Activated CD8-positive, alpha-beta T cell treated with anti-CD3 and anti-CD28 coated beads for 36 hours (primary cell): ENCODE measurements at regions of chr17 and their contacts with region 1.

Region 1: DNA sequence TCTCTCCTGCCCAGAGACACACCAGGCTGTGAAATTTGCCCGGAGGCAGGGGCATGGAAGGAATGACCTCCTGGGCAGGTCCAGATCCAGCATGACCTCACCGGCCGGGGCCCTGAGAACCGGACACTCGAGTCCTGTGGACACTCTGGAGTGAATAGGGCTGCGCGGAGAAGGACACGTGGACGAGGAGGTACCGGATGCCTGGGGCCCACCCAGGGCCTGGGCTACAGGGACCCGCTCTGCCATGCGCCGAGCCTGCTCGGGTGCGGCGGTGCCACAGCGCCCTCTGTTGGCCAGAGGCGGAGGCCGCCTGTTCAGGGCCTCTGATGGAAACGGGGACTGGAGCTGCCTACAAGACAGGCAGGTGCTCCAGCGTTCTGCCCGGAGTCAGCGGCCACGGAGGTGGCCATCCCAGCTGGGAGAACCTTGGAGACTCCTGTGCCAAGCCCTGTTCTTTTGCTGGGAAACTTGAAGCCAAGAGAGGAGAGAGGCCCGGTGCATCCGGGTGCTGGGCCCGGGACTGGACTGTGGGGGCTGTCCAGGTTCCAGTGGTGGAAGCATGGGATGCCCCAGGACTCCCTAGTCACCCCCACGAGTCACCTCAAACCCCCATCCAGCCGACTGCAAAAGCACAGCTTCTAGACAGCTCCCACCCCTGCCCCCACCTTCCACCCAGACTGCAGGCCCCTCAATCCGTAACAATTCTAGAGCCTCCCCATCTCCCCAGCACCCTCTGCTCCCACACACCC is 19.3 kb upstream of the NXPH3 start:
- DNase-seq: peak; percentile 90
- ATAC-seq: peak; percentile 98
- H3K4me3 Mint-ChIP-seq: no peak overlapping the region
- H3K27ac Mint-ChIP-seq: peak overlapping the region; percentile 20
- H3K4me1 Mint-ChIP-seq: peaks cover 2% of the 10 kb centered on the region
- H3K27me3 Mint-ChIP-seq: peaks cover 2% of the 10 kb centered on the region
- CTCF ChIP-seq: peak; percentile 98

Region 2: DNA sequence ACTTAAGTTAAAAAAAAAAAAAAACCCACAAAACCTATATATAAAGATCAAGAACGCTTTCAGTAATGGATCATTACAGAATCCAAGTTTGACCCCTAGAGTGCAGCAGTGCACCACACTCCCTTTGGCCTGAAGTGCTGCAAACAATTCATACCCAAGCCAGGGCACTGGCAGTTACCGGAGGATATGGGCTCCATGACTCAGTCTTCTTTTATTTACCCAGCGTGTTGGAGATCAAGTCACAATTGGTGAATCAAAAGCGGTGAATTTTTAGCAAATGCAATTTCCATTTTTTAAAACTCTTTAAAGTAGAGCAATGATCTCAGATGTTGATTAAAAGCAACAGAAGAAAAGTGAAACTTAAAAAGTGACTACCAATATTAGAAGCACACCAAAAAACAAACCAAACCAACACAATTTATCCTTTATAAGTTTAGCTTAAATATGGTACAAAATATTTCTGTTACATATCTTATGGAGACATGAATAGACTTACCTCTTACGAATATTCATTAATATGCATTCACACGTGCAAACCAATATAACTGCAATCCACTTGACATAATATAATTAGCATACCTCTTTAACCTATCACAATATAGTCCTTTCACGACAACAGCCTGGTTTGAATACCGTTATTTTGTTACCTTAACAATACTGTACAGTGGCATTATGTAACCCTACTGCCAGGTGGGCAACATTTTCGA is 240.7 kb before region 1 on chr17:
- CTCF ChIA-PET with region 1: interaction called, 12 read pairs
- POLR2A ChIA-PET with region 1: no interaction called
- intact Hi-C with region 1: no loop called
- DNase-seq: peak; percentile 89
- ATAC-seq: peak; percentile 100
- H3K4me3 Mint-ChIP-seq: peak overlapping the region; percentile 47
- H3K27ac Mint-ChIP-seq: peak overlapping the region; percentile 14
- H3K4me1 Mint-ChIP-seq: peaks cover 28% of the 10 kb centered on the region
- H3K27me3 Mint-ChIP-seq: no peaks in the 10 kb centered on the region
- CTCF ChIP-seq: peak; percentile 91

Region 3: GRCh38 chr17:49414622-49415350 is 141.6 kb before region 1 on chr17 and contains the start of gene PHB1:
- CTCF ChIA-PET with region 1: interaction called, 160 read pairs
- POLR2A ChIA-PET with region 1: no interaction called
- intact Hi-C with region 1: loop called (anchors 2 kb)
- DNase-seq: peak; percentile 98
- ATAC-seq: peak; percentile 100
- H3K4me3 Mint-ChIP-seq: peak within 1 kb of the TSS; percentile 95
- H3K27ac Mint-ChIP-seq: peak within 1 kb of the TSS; percentile 90
- H3K4me1 Mint-ChIP-seq: peaks cover 20% of the 10 kb centered on the region
- H3K27me3 Mint-ChIP-seq: peaks cover 2% of the 10 kb centered on the region
- CTCF ChIP-seq: no peak
- total RNA-seq, gene PHB1: 363 to 381 TPM

Region 4: DNA sequence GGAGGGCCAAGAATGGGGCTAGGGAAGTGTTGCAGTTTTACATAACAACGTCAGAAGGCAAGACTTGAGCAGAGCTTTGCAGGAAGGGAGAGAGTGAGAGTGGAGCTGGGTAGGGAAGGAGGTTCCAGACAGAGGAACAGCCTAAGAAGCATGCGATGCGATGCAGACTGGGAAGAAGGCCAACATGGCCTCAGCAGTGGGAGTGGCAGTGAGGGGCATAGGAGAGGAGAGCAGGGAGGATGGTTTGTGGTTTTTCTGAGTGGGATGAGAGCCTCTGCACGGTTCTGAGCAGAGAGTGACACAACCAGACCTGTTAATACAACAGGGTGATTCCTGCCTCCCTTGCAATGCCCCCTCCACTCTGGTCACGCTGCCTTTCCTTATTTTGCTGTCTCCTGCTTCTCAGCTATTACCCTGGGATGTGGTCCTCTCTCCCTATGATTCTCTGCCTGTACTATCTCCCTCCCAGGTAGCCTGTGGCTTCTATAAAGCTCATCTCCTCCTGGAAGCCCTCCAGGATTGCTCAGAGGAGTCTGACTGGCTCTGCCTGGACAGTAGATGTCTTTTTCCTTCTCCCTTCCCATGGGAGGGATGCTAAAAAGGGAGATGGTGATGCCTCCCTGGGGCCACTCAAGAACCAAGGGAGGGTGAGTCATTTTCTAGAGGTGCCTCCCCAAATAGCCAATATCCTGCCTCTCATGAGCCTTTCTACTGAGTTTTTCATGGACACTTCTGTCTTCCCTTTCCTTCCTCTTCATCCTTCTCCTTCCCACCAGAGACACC is 100.0 kb before region 1 on chr17:
- CTCF ChIA-PET with region 1: interaction called, 32 read pairs
- POLR2A ChIA-PET with region 1: no interaction called
- intact Hi-C with region 1: no loop called
- DNase-seq: no peak
- ATAC-seq: no peak
- H3K4me3 Mint-ChIP-seq: no peak overlapping the region
- H3K27ac Mint-ChIP-seq: no peak overlapping the region
- H3K4me1 Mint-ChIP-seq: peaks cover 2% of the 10 kb centered on the region
- H3K27me3 Mint-ChIP-seq: peaks cover 29% of the 10 kb centered on the region
- CTCF ChIP-seq: no peak

Region 5: DNA sequence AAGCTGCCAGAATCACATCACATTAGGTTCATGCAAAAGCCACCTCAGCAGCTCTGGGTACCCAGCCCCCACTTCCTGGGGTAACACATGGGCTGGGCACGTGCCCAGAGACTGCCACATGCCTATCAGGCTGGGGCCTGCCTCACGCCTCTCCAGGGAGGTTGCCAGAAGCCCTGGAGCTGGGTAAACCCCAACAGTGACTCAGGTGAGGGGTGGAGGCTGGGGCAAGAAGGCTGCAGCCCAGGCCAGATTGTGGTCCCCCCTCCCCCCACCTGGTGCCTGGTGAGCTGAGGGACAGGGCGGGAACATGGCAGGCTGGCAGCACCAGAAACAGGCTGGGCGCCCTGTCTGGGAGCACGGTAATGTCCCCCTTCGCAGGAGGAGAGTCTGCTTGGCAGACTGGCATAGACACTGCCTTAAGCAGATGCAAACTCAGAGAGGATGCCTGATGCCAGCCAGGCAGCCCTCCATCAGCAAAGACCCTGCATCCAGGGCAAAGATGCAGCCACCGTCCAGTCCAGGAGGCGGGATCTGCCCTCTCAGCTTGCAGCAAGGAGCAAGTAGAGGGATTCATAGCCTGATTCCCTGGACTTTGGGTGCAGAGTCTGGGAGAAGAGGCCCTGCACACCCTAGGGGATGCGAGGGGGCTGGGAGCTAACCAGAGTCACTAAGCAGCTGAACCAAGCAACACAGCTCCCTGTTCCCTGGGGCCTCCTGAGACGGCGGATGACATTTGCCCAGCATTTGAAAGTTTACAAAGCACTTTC is 32.5 kb before region 1 on chr17:
- CTCF ChIA-PET with region 1: interaction called, 10 read pairs
- POLR2A ChIA-PET with region 1: no interaction called
- intact Hi-C with region 1: no loop called
- DNase-seq: peak; percentile 71
- ATAC-seq: peak; percentile 96
- H3K4me3 Mint-ChIP-seq: no peak overlapping the region
- H3K27ac Mint-ChIP-seq: no peak overlapping the region
- H3K4me1 Mint-ChIP-seq: peaks cover 5% of the 10 kb centered on the region
- H3K27me3 Mint-ChIP-seq: peaks cover 4% of the 10 kb centered on the region
- CTCF ChIP-seq: no peak

Region 6: GRCh38 chr17:49670002-49670401 is 113.6 kb after region 1 on chr17:
- CTCF ChIA-PET with region 1: no interaction called
- POLR2A ChIA-PET with region 1: no interaction called
- intact Hi-C with region 1: no loop called
- DNase-seq: no peak
- ATAC-seq: no peak
- H3K4me3 Mint-ChIP-seq: no peak overlapping the region
- H3K27ac Mint-ChIP-seq: peak overlapping the region; percentile 64
- H3K4me1 Mint-ChIP-seq: peaks cover 53% of the 10 kb centered on the region
- H3K27me3 Mint-ChIP-seq: no peaks in the 10 kb centered on the region
- CTCF ChIP-seq: no peak

Region 7: GRCh38 chr17:49851387-49852291 is 295.2 kb after region 1 on chr17:
- CTCF ChIA-PET with region 1: interaction called, 10 read pairs
- POLR2A ChIA-PET with region 1: no interaction called
- intact Hi-C with region 1: no loop called
- DNase-seq: peak; percentile 80
- ATAC-seq: peak; percentile 77
- H3K4me3 Mint-ChIP-seq: peak overlapping the region; percentile 76
- H3K27ac Mint-ChIP-seq: peak overlapping the region; percentile 81
- H3K4me1 Mint-ChIP-seq: peaks cover 14% of the 10 kb centered on the region
- H3K27me3 Mint-ChIP-seq: no peaks in the 10 kb centered on the region
- CTCF ChIP-seq: peak; percentile 80

Region 8: DNA sequence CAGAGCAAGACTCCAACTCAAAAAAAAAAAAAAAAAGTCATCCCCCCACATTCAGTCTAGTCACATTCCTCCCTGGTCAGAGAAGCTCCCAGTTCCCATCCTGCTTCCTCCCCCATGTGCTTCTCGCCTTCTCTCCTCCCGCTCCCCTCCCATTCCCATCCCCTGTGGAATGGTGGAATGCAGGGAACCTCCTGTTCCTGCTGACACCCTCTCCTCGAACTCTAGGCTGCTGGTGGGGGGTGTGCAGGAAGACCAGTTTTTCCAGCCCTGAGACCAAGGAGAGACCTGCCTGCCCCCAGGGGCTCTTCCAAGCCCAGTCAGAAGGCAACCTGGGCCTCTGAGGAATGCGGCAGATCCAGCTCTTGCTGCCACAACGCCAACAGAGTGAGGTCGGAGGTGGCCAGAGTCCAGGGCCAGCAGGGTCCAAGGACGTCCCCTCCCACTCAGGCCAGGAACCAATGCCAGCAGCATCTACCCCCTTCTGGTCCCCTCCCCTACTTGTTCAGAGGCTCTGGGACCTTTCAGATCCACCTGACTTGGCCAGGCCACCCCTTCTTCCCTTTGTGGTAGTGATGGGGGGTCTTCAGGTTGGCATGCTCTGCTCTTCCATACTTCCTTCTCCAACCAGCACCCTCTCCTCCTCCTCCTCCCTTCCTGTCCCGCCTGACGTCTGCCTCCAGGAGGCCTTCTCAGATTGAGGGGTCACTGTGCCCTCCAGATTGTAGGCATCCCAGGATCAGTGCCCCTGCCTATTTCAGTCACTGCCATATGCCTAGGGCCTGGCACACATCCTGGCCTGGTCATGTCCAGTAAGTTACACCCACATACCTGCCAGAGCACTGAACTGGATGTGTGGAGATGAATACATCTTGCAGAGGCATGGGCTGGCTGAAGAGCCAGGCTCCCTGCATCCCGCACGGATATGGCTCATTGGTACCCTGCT is 331.0 kb after region 1 on chr17:
- CTCF ChIA-PET with region 1: no interaction called
- POLR2A ChIA-PET with region 1: no interaction called
- intact Hi-C with region 1: no loop called
- DNase-seq: no peak
- ATAC-seq: no peak
- H3K4me3 Mint-ChIP-seq: no peak overlapping the region
- H3K27ac Mint-ChIP-seq: no peak overlapping the region
- H3K4me1 Mint-ChIP-seq: no peaks in the 10 kb centered on the region
- H3K27me3 Mint-ChIP-seq: peaks cover 33% of the 10 kb centered on the region
- CTCF ChIP-seq: no peak